Prostate gland (tissue), 2 donors: ENCODE measurements at regions of chr1 and their contacts with region 1.

Region 1: DNA sequence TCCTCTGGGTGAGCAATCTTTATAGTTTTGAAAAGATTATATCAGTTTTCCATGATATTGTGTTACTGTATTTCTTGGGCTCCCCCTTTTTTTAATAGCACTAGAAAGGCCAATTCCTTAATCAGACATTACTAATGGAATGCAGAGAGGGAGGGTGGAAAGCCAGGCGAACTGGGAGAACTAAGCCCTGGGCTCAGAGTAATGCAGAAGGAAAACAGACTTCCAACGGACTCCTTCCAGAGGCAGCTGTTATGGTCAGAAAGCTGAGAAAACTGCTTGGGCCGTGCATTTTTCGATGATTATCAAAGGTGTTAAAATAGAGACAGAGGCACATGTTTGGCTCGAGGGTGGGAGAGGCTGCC is 206.3 kb downstream of the FOXD2 start:
- DNase-seq: no peak
- H3K4me3 ChIP-seq: no peak overlapping the region
- H3K27ac ChIP-seq: no peak overlapping the region
- H3K4me1 ChIP-seq: no peaks in the 10 kb centered on the region
- H3K27me3 ChIP-seq: no peaks in the 10 kb centered on the region
- CTCF ChIP-seq: no peak
- POLR2A ChIP-seq: no peak

Region 2: GRCh38 chr1:47684964-47685762 is 41.0 kb after region 1 on chr1:
- intact Hi-C with region 1: loop called (anchors 5 kb)
- DNase-seq: peak; percentile 57
- H3K4me3 ChIP-seq: no peak overlapping the region
- H3K27ac ChIP-seq: peak overlapping the region; percentile 28 to 51
- H3K4me1 ChIP-seq: peaks cover 11% of the 10 kb centered on the region
- H3K27me3 ChIP-seq: no peaks in the 10 kb centered on the region
- CTCF ChIP-seq: no peak
- POLR2A ChIP-seq: no peak